Mucosa of descending colon (tissue), 3 donors: ENCODE measurements at regions of chr10 and their contacts with region 1.

Region 1: DNA sequence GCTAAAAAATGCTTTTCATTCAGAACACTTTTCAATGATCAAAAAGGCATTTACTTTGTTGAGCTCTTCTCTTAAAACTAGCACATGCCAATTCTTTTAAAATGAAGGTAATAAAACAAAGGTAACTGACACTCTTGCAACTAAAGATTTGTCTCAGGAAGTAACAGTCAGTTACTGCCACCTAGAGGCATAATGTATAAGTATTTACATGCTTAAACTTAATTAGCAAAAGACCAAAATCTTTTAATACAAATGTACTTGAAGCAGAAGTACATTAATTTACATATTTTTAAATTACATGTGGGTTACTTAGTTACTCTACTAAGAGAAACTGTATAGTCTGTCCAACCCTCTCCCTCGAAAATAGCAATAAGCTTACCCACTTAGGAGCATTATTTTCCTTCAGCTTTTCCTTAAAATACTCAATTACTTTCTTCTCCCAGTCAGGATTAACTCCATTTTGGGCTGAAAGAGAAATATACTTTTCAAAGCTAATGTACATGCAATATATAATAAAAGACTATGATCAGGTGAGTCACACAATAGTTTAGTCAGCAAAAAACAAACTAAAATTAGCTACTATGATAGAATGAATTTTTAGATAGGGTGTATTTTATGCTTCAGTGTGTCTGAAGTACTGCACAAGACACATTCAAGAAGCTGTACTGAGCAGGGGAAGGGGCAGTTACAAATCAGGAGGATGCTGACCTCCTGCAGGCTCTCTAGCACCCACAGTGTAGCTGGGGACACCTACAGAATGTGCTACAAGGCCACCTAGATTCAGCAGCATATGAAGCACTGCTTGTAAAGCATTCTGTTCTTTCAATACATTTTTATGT is 13.0 kb downstream of the MCMBP start:
- DNase-seq: no peak
- ATAC-seq: peak; percentile 65
- H3K4me3 ChIP-seq: no peak overlapping the region
- H3K4me1 ChIP-seq: peaks cover 3% of the 10 kb centered on the region
- CTCF ChIP-seq: peak; percentile 22

Region 2: DNA sequence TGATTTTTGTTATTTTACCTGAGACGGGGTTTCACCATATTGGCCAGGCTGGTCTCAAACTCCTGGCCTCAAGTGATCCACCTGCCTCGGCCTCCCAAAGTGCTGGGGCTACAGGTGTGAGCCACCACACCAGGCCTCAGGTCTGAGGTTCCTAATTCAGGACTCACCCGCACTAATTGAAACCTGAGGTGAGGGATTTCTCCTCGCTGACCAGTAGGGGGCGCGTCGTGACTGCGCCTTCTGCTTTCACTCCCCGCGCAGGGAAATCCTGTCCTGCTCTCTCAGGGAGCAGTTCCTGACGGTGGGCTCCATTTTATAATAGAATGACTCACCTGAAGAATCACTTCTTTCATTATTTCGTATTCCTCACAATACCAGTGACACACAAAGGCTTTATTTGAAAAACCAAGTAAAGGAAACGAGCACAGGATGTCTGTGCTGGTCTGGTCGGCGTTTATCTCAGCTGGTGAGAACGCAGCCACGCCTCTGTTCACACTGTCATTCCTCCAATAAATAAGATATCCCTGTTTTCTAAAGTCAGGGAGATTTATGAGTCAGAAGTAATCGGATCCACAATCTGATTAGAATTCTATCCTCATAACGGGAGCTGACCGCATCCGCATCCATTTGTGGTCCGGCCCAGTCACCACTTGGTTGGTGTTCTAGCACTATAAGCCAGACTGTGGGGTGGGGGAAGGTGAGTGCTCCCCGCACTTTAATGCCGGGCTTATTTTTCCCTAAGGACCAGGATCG is 173.0 kb before region 1 on chr10:
- intact Hi-C with region 1: loop called in 1 of 2 experiments (anchors 10 kb)
- DNase-seq: peak; percentile 65 to 85 (median 77)
- ATAC-seq: peak; percentile 98
- H3K4me3 ChIP-seq: no peak overlapping the region
- H3K4me1 ChIP-seq: no peaks in the 10 kb centered on the region
- CTCF ChIP-seq: peak; percentile 92

Region 3: DNA sequence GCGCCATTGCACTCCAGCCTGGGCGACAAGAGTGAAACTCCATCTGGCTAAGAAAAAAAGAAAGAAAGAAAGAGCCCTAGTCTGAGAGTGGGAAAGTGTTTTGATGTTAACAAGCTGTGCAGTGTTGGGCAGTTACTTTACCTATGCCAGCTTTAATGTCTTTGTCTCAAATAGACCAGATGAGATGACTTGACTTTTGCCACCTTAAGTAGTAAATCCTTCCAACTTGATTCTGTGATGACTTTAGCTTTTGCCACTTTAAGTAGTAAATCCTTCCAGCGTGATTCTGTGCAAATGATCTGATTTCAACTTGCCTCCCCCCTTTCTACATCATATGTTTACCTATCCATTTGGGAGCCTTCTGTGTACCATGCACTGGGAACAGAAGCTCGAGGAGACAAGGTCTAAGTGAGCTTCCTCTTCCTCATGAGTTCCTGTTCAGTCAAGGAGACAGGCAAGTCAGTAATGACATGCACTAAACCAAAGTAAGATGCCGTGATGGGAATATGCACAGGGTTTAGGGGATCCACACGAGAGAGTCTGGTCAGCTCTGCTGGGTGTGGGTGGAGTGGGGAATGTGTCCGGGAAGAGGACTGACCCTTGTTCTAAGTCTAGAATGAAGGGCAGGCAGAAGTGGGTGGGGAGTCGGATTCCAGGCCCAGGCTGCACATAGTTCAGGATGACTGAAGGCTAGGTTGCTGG is 116.5 kb before region 1 on chr10:
- intact Hi-C with region 1: loop called in 1 of 2 experiments (anchors 10 kb)
- DNase-seq: no peak
- ATAC-seq: peak; percentile 74
- H3K4me3 ChIP-seq: no peak overlapping the region
- H3K4me1 ChIP-seq: no peaks in the 10 kb centered on the region
- CTCF ChIP-seq: no peak